Activated naive CD4-positive, alpha-beta T cell treated with anti-CD3 and anti-CD28 coated beads for 36 hours (primary cell): ENCODE measurements at regions of chr17 and their contacts with region 1.

Region 1: DNA sequence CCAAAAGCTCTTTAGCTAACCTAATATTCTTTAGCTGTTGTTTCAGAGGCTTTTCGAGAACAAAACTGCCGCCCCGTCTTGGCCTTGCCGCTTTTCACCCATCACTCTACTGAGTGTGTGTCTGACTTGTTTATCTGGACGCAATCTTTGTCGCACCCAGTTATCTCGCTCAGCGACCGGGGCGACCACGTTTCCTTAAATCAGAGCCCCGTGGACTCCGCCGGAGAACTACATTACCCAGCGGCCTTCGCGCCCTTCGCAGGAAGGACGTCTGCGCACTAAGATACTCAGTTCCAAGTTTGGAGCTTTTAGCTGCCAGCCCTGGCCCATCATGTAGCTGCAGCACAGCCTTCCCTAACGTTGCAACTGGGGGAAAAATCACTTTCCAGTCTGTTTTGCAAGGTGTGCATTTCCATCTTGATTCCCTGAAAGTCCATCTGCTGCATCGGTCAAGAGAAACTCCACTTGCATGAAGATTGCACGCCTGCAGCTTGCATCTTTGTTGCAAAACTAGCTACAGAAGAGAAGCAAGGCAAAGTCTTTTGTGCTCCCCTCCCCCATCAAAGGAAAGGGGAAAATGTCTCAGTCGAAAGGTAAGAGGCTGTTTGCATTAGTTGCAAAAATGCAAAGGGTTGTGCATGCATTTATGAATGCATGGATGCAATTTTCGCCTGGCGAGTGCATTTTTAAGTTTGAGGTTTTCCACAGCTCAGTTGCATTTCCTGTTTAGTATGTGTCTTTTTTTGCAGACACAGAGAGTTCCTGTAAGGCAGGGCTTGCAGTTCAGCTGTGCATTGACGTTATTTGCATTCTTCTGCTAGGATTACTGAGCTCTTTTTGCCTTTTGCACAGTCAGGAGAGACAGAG is at the start of gene MAP2K6:
- DNase-seq: peak; percentile 88
- H3K4me3 Mint-ChIP-seq: no peak within 1 kb of the TSS
- H3K27ac Mint-ChIP-seq: no peak within 1 kb of the TSS
- H3K4me1 Mint-ChIP-seq: peaks cover 15% of the 10 kb centered on the region
- H3K27me3 Mint-ChIP-seq: no peaks in the 10 kb centered on the region
- total RNA-seq, gene MAP2K6: 2.4 to 2.7 TPM

Region 2: GRCh38 chr17:68356520-68356919 is 1058.1 kb before region 1 on chr17:
- CTCF ChIA-PET with region 1: no interaction called
- intact Hi-C with region 1: loop called (anchors 10 kb)
- DNase-seq: peak; percentile 85
- H3K4me3 Mint-ChIP-seq: no peak overlapping the region
- H3K27ac Mint-ChIP-seq: peak overlapping the region; percentile 46
- H3K4me1 Mint-ChIP-seq: peaks cover 49% of the 10 kb centered on the region
- H3K27me3 Mint-ChIP-seq: no peaks in the 10 kb centered on the region

Region 3: GRCh38 chr17:69327060-69327831 is 87.4 kb before region 1 on chr17 and contains the start of gene ABCA5:
- CTCF ChIA-PET with region 1: interaction called, 3 read pairs
- intact Hi-C with region 1: loop called (anchors 1 kb)
- DNase-seq: peak; percentile 92
- H3K4me3 Mint-ChIP-seq: peak within 1 kb of the TSS; percentile 93
- H3K27ac Mint-ChIP-seq: peak within 1 kb of the TSS; percentile 95
- H3K4me1 Mint-ChIP-seq: peaks cover 31% of the 10 kb centered on the region
- H3K27me3 Mint-ChIP-seq: peaks cover 2% of the 10 kb centered on the region
- total RNA-seq, gene ABCA5: 14.3 to 15.1 TPM

Region 4: GRCh38 chr17:69457603-69458002 is 43.0 kb after region 1 on chr17:
- CTCF ChIA-PET with region 1: no interaction called
- intact Hi-C with region 1: loop called (anchors 2 kb)
- DNase-seq: no peak
- H3K4me3 Mint-ChIP-seq: no peak overlapping the region
- H3K27ac Mint-ChIP-seq: no peak overlapping the region
- H3K4me1 Mint-ChIP-seq: peaks cover 14% of the 10 kb centered on the region
- H3K27me3 Mint-ChIP-seq: no peaks in the 10 kb centered on the region

Region 5: GRCh38 chr17:70137451-70138230 is 723.0 kb after region 1 on chr17:
- CTCF ChIA-PET with region 1: no interaction called
- intact Hi-C with region 1: loop called (anchors 5 kb)
- DNase-seq: peak; percentile 59
- H3K4me3 Mint-ChIP-seq: no peak overlapping the region
- H3K27ac Mint-ChIP-seq: no peak overlapping the region
- H3K4me1 Mint-ChIP-seq: peaks cover 18% of the 10 kb centered on the region
- H3K27me3 Mint-ChIP-seq: no peaks in the 10 kb centered on the region